Esophagus squamous epithelium (tissue), 5 donors: ENCODE measurements at regions of chr7 and their contacts with region 1.

Region 1: DNA sequence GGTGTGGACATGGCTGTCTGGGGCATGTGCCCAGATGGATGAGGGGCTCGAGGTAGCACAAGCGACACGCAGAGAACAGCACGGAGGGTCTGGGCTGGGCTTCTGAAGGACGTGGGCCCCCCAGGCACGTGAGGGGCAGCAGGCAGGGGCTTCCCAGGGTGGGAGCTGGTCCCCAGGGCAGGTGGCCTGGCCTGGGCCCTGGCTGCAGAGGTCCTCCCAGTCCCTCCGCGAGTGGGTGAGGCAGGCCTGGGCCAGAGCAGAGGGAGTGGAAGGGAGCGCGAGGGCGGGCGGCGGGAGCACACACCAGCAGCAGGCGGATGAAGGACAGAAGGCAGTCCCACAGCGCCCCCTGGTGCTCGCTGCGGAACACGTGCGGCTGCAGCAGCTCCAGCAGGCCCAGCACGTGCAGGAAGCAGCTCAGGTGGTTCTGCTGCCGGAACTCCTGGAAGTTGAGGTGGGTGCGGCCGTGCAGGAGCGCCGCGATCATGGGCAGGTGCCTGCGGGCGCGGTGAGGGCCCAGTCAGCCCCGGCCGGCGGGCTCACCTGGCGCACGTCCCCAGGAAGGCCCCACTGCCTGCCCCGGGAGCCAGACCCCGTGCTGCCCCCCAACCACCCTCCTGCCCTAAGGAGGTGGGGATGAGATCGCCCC is 14.7 kb upstream of the MICALL2 start:
- DNase-seq: peak; percentile 26
- H3K4me3 ChIP-seq: no peak overlapping the region
- H3K27ac ChIP-seq: peak overlapping the region; percentile 10 to 71 (median 66)
- H3K4me1 ChIP-seq: peaks cover 12 to 18% (median 13%) of the 10 kb centered on the region in 3 donors
- H3K27me3 ChIP-seq: no peaks in the 10 kb centered on the region
- CTCF ChIP-seq: peak; percentile 84 to 99 (median 93)
- POLR2A ChIP-seq: no peak

Region 2: GRCh38 chr7:1225441-1226185 is 248.4 kb before region 1 on chr7:
- intact Hi-C with region 1: loop called (anchors 10 kb)
- DNase-seq: no peak
- H3K4me3 ChIP-seq: no peak overlapping the region
- H3K27ac ChIP-seq: no peak overlapping the region
- H3K4me1 ChIP-seq: peaks cover 6 to 34% (median 6%) of the 10 kb centered on the region in 3 donors
- H3K27me3 ChIP-seq: peaks cover 40 to 100% (median 67%) of the 10 kb centered on the region in 4 donors
- CTCF ChIP-seq: peak; percentile 39 to 76 (median 67)
- POLR2A ChIP-seq: no peak

Region 3: GRCh38 chr7:1432411-1433082 is 41.4 kb before region 1 on chr7:
- intact Hi-C with region 1: loop called (anchors 5 kb)
- DNase-seq: no peak
- H3K4me3 ChIP-seq: no peak overlapping the region
- H3K27ac ChIP-seq: no peak overlapping the region
- H3K4me1 ChIP-seq: peaks cover 0 to 23% (median 4%) of the 10 kb centered on the region in 3 donors
- H3K27me3 ChIP-seq: peaks cover 0 to 49% (median 2%) of the 10 kb centered on the region in 4 donors
- CTCF ChIP-seq: peak; percentile 91 to 99 (median 94)
- POLR2A ChIP-seq: no peak

Region 4: DNA sequence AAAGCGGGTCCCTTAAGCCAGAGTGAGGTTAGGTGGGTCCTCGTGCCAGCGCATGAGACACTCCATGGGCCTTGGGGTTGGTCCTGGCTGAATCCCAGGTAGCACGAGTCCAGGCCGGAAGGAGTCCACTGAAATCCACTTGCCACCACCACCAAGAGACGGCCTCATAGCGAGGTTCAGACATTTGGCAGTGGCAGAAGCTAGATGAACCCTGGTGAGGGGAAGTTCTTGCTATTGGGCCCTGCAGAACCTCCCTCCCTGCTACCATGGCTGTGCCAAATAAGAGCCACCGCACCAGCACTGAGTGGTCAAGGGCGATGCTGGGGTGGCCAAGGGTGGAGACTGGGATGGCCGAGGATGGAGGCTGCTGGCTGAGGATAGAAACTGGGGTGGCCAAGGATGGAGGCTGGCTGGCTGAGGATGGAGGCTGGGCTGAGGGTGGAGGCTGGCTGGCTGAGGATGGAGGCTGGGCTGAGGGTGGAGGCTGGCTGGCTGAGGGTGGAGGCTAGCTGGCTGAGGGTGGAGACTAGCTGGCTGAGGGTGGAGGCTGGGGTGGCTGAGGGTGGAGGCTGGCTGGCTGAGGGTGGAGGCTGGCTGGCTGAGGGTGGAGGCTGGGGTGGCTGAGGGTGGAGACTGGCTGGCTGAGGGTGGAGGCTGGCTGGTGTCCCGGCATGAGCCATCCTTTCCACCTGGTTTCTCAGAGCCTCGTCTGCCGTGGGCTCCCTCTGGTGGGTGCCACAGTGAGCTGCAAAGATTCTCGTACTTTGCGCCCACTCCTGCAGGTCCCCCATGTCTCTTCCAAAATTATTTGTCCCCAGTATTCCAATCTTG is 284.3 kb after region 1 on chr7:
- intact Hi-C with region 1: no loop called
- DNase-seq: no peak
- H3K4me3 ChIP-seq: no peak overlapping the region
- H3K27ac ChIP-seq: no peak overlapping the region
- H3K4me1 ChIP-seq: no peaks in the 10 kb centered on the region
- H3K27me3 ChIP-seq: peaks cover 0 to 56% (median 0%) of the 10 kb centered on the region in 4 donors
- CTCF ChIP-seq: peak in 5 of 6 experiments; percentile 7 to 47 (median 21)
- POLR2A ChIP-seq: no peak